Posterior vena cava (tissue), 2 donors: ENCODE measurements at regions of chr1 and their contacts with region 1.

Region 1: GRCh38 chr1:153510984-153511410 is 24.8 kb downstream of the S100A6 start:
- DNase-seq: peak; percentile 93

Region 2: GRCh38 chr1:153465811-153466636 is 45.0 kb before region 1 on chr1:
- intact Hi-C with region 1: loop called in 1 of 2 experiments (anchors 2 kb)
- DNase-seq: peak; percentile 89

Region 3: DNA sequence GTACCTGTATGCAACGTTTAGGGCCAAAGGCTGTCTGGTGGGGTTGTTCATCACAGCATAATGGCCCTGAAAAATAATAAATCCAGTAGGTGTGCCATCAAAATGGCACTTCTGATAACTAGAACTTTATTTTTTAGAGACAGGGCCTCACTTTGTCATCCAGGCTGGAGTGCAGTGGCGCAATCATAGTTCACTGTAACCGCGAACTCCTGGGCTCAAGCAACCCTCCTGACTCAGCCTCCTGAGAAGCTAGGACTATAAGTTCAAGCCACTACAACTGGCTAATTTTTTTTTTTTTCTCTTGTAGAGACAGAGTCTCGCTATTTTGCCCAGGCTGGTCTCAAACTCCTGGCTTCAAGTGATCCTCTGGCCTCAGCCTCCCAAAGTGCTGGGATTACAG is 152.2 kb after region 1 on chr1:
- intact Hi-C with region 1: loop called in 1 of 2 experiments (anchors 10 kb)
- DNase-seq: no peak

Region 4: GRCh38 chr1:153749408-153750005 is 238.5 kb after region 1 on chr1:
- intact Hi-C with region 1: loop called in 1 of 2 experiments (anchors 10 kb)
- DNase-seq: peak; percentile 96